ENCODE measurements at regions of chr2 and their contacts with region 1.

Region 1: DNA sequence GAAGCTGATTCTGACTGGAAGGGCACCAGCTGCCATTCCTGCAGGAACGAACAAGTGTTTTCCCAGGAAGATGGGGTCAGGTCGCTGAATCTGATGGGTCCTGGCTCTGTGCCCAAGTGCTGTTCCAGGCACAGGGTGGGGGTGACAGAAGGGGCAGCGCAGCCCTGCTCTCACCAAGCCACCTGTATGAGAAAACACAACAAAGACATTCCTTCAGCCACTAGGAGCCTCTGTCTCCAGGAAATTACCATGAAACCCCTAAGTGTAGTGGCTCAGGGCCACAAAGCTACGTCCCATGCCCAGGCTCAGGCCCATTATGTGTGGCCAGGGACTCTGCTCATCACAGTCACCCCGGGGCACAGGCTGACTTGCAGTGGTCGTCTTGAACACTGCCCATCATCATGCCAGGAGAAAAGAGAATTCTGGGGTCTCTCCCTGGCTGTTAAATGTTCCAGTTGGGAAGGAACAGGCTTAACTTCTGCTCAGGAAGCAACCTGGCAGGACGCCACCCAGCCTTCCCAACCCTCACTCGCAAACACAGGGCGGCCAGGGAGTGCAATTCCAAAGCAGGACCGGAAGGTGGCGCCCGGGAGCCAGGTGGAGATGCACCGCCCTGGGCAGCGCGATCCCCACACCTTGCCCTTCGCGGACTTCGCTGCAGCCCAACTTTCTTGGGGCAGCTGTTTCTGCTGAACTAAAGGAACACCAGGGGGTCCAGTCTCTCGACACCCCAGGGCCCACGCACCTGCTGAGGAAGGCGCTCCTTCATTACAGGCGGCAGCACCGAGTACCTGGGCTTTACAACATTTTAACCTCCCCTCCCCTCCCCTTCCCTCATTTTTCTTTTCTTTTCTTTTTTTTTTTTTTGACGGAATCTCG is 11.0 kb upstream of the SFTPB start:
- DNase-seq: peak; percentile 84
- ATAC-seq: peak; percentile 91
- H3K4me3 Mint-ChIP-seq: no peak overlapping the region
- H3K27ac Mint-ChIP-seq: no peak overlapping the region
- H3K4me1 Mint-ChIP-seq: peaks cover 26% of the 10 kb centered on the region
- H3K27me3 Mint-ChIP-seq: peaks cover 3% of the 10 kb centered on the region

Region 2: DNA sequence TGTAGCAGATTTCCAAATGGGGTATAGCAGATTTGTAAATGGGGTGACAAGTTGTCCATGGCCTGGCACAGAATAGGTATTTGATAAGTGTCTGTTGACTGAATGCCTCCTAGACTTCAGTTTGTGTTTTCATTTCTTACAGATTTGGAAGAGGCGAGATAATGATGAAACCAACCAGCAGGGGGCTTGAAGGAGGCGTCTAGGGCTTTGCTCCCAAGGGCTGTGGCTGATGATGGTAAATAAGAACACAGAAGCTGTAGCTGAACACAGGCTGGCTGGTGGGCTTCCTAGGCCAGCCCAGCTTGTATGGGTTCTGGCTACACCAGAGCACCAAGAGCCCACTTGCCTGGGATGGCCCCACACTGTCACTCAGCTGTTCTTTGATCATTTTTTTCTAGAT is 30.4 kb before region 1 on chr2:
- CTCF ChIA-PET with region 1: interaction called, 10 read pairs
- POLR2A ChIA-PET with region 1: no interaction called
- DNase-seq: peak; percentile 51
- ATAC-seq: peak; percentile 75
- H3K4me3 Mint-ChIP-seq: no peak overlapping the region
- H3K27ac Mint-ChIP-seq: no peak overlapping the region
- H3K4me1 Mint-ChIP-seq: no peaks in the 10 kb centered on the region
- H3K27me3 Mint-ChIP-seq: no peaks in the 10 kb centered on the region

Region 3: DNA sequence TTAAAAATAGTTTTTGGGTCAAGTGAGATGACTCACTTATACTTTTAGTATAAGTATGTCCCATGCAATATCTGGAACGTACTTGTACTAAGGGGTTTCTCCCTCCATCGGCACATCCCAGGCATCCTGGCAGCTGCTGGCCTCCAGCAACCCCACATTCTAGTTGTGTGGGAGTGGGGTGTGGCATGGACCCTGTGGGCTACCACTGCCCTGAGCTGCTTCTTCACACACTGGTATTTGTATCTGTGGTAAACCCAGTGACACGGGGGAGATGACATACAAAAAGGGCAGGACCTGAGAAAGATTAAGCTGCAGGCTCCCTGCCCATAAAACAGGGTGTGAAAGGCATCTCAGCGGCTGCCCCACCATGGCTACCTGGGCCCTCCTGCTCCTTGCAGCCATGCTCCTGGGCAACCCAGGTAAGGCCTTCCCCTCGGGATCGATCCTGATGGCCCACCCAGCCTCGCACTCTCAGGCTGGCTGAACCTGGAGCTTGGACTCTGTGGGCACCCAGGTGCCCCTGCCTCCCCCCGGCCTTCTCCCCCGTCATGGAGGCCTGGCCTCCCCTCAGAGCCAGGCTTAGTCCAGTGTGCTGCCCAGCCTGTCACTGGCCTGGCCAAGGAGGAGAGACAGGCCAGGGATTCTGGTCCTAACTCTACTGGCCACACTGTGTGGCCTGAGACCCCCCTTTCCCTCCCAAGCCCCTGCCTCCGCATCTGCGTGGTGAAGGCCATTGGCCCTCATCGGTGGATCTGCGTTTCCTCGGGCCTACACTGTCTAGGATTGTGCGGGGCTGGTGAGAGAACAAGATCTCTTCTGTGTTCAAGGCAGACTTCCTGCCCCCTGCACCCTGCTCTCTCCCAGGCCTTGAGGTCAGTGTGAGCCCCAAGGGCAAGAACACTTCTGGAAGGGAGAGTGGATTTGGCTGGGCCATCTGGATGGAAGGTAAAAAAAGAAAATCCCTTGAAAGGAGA is 15.3 kb after region 1 on chr2 and contains the start of gene GNLY:
- CTCF ChIA-PET with region 1: interaction called, 12 read pairs
- POLR2A ChIA-PET with region 1: interaction called, 4 read pairs
- DNase-seq: no peak
- ATAC-seq: peak; percentile 23
- H3K4me3 Mint-ChIP-seq: peak within 1 kb of the TSS; percentile 50
- H3K27ac Mint-ChIP-seq: peak within 1 kb of the TSS; percentile 75
- H3K4me1 Mint-ChIP-seq: peaks cover 48% of the 10 kb centered on the region
- H3K27me3 Mint-ChIP-seq: peaks cover under 1% of the 10 kb centered on the region
- total RNA-seq, gene GNLY: 136 to 143 TPM